PC-3 (cell line): ENCODE measurements at regions of chr17 and their contacts with region 1.

Region 1: DNA sequence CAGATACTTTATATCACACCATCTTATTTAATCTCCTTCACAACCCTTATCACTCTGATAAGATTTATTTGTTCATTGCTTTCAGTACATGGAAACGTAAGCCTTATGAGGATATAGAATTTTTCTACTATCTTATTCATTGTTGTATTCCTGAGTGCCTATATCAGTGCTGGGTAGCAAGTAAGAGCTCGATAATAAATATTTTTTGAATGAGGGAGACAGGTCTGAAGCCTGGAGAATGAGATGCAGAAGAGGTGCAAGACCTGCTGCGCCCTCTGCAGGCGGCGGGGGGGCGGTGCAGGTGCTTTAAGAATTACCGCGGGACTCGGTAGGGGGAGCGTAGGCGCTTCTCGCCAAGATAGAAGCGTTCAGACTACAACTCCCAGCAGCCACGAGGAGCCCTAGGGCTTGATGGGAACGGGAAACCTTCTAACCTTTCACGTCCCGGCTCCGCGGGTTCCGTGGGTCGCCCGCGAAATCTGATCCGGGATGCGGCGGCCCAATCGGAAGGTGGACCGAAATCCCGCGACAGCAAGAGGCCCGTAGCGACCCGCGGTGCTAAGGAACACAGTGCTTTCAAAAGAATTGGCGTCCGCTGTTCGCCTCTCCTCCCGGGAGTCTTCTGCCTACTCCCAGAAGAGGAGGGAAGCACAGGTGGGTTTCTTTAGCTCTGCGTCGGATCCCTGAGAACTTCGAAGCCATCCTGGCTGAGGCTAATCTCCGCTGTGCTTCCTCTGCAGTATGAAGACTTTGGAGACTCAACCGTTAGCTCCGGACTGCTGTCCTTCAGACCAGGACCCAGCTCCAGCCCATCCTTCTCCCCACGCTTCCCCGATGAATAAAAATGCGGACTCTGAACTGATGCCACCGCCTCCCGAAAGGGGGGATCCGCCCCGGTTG is at the start of gene WRAP53:
- DNase-seq: peak; percentile 97
- ATAC-seq: peak; percentile 87
- H3K4me3 ChIP-seq: peak within 1 kb of the TSS; percentile 85
- H3K27ac ChIP-seq: peak within 1 kb of the TSS; percentile 96
- H3K4me1 ChIP-seq: peaks cover 16% of the 10 kb centered on the region
- H3K27me3 ChIP-seq: no peaks in the 10 kb centered on the region
- CTCF ChIP-seq: peak; percentile 94
- total RNA-seq, gene WRAP53: 18.0 and 22.6 TPM in 2 replicates

Region 2: DNA sequence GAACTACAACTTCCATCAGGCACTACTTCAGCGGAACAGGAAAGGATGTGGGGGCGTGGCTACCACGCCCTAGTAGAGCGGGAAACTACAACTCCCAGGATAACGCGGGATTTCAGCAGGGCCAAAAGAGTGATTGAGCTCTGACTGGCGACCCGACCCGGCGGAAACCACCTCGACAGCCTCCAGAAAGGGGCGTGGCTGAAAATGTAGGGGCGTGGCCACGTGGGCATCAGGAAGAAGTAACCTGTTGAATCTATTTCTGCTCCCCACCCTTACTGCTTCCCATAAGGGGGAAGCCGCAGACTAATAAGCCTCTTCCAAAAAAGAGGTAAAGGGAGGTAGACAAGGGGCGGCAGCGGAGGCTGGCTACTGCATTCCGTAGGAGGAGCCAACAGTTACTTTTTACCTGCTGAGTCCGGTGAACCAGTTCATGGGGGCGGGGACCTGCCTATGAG is 252.9 kb before region 1 on chr17 and contains the start of gene TMEM102:
- CTCF ChIA-PET with region 1: no interaction called
- POLR2A ChIA-PET with region 1: no interaction called
- intact Hi-C with region 1: loop called (anchors 5 kb)
- DNase-seq: peak; percentile 96
- ATAC-seq: peak; percentile 77
- H3K4me3 ChIP-seq: peak within 1 kb of the TSS; percentile 71
- H3K27ac ChIP-seq: peak within 1 kb of the TSS; percentile 40
- H3K4me1 ChIP-seq: peaks cover 4% of the 10 kb centered on the region; the same call in 1 of the 2 replicates
- H3K27me3 ChIP-seq: no peaks in the 10 kb centered on the region
- CTCF ChIP-seq: no peak
- total RNA-seq, gene TMEM102: 14.0 and 17.9 TPM in 2 replicates

Region 3: DNA sequence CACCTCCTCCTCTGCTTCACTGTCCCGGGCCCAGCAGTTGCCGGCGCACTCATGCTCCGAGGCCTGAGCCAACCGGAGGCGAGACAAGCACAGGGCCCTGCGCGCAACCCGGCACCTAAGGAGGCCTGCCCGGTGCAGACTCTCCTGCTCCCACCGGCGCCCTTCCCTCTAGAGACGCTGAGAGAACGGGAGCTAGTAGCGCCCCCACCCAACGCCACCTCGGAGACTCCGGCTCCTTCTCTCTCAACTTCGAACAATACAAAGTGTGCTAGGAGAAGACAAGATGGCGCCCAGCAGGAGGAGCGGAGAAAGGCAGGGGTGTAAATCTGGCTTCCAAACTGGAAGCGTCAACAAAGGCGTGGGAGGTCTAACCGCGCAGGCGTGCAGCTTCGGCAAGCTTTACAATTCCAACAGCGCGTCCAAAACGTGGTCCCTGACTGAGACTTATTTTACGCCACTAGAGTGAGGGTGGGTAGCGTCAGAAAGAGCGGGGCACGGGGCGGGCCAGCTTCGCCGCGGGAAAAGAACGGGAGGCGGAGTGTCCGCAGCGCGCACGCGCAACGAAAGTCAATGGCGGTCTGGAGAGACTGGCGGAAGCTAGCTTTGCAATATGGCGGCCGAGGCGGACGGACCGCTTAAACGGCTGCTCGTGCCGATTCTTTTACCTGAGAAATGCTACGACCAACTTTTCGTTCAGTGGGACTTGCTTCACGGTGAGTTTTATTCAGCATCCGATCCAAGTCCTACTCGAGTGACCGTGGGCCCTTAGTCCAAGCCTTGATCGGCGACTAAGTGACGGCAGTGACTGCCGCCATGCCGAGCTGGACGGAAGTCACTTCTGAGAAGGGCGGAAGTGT is 104.7 kb before region 1 on chr17 and contains the start of gene MPDU1:
- CTCF ChIA-PET with region 1: interaction called, 4 read pairs
- POLR2A ChIA-PET with region 1: interaction called, 14 read pairs
- intact Hi-C with region 1: loop called (anchors 5 kb)
- DNase-seq: peak; percentile 91
- ATAC-seq: peak; percentile 46
- H3K4me3 ChIP-seq: peak within 1 kb of the TSS; percentile 81
- H3K27ac ChIP-seq: peak within 1 kb of the TSS; percentile 90
- H3K4me1 ChIP-seq: peaks cover 46% of the 10 kb centered on the region
- H3K27me3 ChIP-seq: no peaks in the 10 kb centered on the region
- CTCF ChIP-seq: no peak
- total RNA-seq, gene MPDU1: 71.0 and 94.1 TPM in 2 replicates

Region 4: GRCh38 chr17:7632492-7632894 is 55.7 kb before region 1 on chr17:
- CTCF ChIA-PET with region 1: interaction called, 8 read pairs
- POLR2A ChIA-PET with region 1: interaction called, 4 read pairs
- intact Hi-C with region 1: loop called (anchors 5 kb)
- DNase-seq: peak; percentile 58
- ATAC-seq: peak; percentile 63
- H3K4me3 ChIP-seq: no peak overlapping the region
- H3K27ac ChIP-seq: no peak overlapping the region
- H3K4me1 ChIP-seq: no peaks in the 10 kb centered on the region
- H3K27me3 ChIP-seq: no peaks in the 10 kb centered on the region
- CTCF ChIP-seq: peak; percentile 56

Region 5: DNA sequence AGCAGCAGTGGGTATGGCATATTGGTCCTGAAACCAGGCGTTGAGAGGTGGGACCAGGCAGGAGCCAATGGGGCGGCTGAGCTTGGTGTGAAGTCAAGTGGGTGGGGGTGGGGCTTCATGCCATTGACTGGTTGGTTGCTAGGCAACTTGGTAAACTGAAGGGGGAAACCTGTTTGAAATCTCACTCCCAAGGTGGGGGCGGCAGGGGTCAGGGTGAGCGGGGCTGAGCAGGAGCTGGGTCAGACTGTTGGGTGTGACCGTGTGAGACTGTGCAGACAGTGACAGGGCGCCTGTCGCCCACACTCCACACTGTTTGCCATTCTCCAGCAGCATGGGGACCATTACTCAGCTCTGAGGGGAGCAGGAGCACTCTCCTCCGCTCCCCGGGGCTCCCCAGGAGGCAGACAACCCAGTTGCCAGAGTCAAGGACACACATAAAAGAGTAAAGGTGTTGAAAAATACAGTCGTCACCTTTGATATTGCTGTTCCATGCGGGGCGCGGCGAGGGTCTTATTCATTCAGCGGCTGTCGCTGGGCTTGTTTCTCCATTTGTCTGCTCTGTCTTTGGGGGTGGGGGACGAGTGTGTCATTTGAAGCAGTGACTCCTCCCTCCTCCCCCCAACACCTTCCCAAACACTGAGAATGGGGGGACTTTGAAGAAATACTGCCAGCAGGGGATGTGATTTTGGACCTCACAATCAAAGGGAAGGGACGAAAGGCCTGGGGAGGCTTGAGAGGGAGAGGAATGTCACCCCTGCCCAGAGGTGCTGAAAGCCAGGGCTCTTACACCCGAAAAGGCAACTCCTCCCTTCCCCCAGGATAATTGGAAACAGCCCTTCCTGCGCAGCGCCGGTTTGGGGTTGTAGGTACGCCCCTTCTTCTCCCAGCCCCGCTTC is 15.7 kb after region 1 on chr17:
- CTCF ChIA-PET with region 1: interaction called, 15 read pairs
- POLR2A ChIA-PET with region 1: no interaction called
- intact Hi-C with region 1: no loop called
- DNase-seq: no peak
- ATAC-seq: no peak; the same call in 1 of the 2 replicates
- H3K4me3 ChIP-seq: peak overlapping the region; percentile 70; the same call in 1 of the 2 replicates
- H3K27ac ChIP-seq: no peak overlapping the region
- H3K4me1 ChIP-seq: no peaks in the 10 kb centered on the region
- H3K27me3 ChIP-seq: no peaks in the 10 kb centered on the region
- CTCF ChIP-seq: no peak

Region 6: GRCh38 chr17:7729816-7730215 is 41.7 kb after region 1 on chr17:
- CTCF ChIA-PET with region 1: no interaction called
- POLR2A ChIA-PET with region 1: no interaction called
- intact Hi-C with region 1: no loop called
- DNase-seq: no peak
- ATAC-seq: no peak
- H3K4me3 ChIP-seq: no peak overlapping the region
- H3K27ac ChIP-seq: no peak overlapping the region
- H3K4me1 ChIP-seq: no peaks in the 10 kb centered on the region
- H3K27me3 ChIP-seq: no peaks in the 10 kb centered on the region
- CTCF ChIP-seq: no peak

Region 7: GRCh38 chr17:7972131-7972785 is 284.1 kb after region 1 on chr17:
- CTCF ChIA-PET with region 1: no interaction called
- POLR2A ChIA-PET with region 1: no interaction called
- intact Hi-C with region 1: no loop called
- DNase-seq: no peak
- ATAC-seq: no peak
- H3K4me3 ChIP-seq: no peak overlapping the region
- H3K27ac ChIP-seq: no peak overlapping the region
- H3K4me1 ChIP-seq: no peaks in the 10 kb centered on the region
- H3K27me3 ChIP-seq: no peaks in the 10 kb centered on the region
- CTCF ChIP-seq: peak; percentile 32; the same call in 1 of the 2 replicates